Activated CD4-positive, alpha-beta T cell treated with anti-CD3 and anti-CD28 coated beads for 36 hours (primary cell): ENCODE measurements at regions of chr10 and their contacts with region 1.

Region 1: DNA sequence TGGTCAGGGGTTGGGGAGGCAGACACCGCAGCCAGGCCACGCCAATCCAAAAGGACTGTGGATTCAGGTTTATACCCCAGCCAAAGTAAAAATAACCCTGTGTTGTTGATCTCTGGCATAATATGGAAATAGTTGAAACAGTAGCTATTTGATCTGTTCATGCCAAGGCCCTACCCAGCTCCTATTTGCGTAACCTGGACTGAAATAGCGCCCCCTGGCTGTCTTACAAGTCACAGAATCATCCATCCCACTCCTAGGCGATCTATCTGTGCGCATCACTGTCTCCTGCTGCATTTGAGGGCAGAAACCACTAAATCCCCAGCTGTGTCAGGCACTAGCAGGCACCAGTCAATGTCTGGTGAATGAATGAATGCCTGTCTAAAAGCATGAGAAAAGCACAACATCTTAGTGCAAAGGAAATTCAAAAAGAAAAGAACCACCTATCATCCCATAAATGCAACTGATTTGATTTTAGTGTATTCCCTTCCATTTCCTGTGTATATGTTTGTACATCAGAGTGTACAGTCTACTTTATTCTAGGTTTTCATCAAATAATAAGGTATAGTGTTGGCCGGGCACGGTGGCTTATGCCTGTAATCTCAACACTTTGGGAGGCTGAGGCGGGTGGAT is 160.0 kb downstream of the SLIT1 start:
- DNase-seq: peak; percentile 81
- ATAC-seq: peak; percentile 89
- H3K4me3 Mint-ChIP-seq: no peak overlapping the region
- H3K27ac Mint-ChIP-seq: no peak overlapping the region
- H3K4me1 Mint-ChIP-seq: no peaks in the 10 kb centered on the region
- H3K27me3 Mint-ChIP-seq: no peaks in the 10 kb centered on the region

Region 2: DNA sequence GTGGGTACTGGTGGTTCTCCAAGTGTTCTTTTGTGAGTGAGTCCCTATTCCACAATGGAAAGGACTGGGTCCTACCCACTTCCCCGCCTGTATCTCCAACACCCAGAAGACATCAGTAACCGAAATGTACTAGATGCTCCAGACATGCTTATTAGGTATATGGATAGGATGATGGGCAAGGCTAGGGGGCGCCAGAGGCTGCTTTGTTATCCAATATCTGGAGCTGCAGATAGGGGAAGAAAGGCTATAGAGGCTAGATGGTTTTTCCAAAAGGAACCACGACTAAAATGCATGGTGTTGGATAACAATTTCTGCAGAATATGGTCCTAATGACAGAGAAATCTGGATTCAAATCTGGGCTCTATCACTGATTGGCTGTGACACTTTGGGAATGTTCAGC is 382.8 kb before region 1 on chr10:
- CTCF ChIA-PET with region 1: interaction called, 13 read pairs
- POLR2A ChIA-PET with region 1: no interaction called
- intact Hi-C with region 1: loop called in 1 of 2 experiments (anchors 1 kb)
- DNase-seq: peak; percentile 88
- ATAC-seq: peak; percentile 80
- H3K4me3 Mint-ChIP-seq: no peak overlapping the region
- H3K27ac Mint-ChIP-seq: no peak overlapping the region
- H3K4me1 Mint-ChIP-seq: peaks cover 22% of the 10 kb centered on the region
- H3K27me3 Mint-ChIP-seq: no peaks in the 10 kb centered on the region

Region 3: DNA sequence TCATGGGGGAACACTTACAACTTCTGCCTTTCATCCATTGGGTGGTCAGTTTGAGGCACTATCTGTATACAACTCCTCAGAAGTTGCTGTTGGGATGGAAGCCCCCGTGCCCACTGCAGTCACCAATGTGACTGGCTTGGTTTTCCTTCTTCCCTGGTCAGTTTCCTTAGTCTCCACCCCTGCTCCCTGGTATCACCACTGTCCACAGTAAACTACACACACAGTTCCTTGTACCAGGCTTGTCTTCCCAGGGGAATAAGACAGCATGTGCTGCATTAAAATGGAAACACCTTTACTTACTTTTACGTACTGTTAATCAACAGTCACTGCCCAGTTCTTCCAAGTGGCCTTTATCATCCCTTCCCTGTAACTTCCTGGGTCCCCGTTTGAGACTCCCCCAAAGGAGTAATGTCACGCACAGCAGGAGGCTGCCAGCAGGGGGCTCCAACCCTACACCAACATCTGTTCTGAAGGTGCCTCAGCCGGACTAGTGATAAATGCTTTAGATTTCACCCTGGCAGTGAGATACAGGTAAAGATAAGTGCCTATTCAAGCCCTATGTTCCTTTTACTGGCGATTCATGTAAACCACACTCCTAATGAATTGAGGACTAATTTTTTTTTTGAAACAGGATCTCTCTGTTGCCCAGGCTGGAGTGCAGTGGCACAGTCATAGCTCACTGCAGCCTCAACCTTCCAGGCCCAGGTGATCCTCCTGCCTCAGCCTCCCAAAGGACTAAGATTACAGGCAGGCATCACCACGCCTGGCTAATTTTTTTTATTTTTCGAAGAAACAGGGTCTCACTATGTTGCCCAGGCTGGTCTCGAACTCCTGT is 260.1 kb before region 1 on chr10:
- CTCF ChIA-PET with region 1: interaction called, 8 read pairs
- POLR2A ChIA-PET with region 1: no interaction called
- intact Hi-C with region 1: loop called in 1 of 2 experiments (anchors 1 kb)
- DNase-seq: peak; percentile 88
- ATAC-seq: peak; percentile 96
- H3K4me3 Mint-ChIP-seq: no peak overlapping the region
- H3K27ac Mint-ChIP-seq: no peak overlapping the region
- H3K4me1 Mint-ChIP-seq: no peaks in the 10 kb centered on the region
- H3K27me3 Mint-ChIP-seq: no peaks in the 10 kb centered on the region

Region 4: GRCh38 chr10:96910488-96911395 is 115.0 kb before region 1 on chr10:
- CTCF ChIA-PET with region 1: interaction called, 46 read pairs
- POLR2A ChIA-PET with region 1: no interaction called
- intact Hi-C with region 1: loop called (anchors 1 to 2 kb)
- DNase-seq: no peak
- ATAC-seq: no peak
- H3K4me3 Mint-ChIP-seq: no peak overlapping the region
- H3K27ac Mint-ChIP-seq: no peak overlapping the region
- H3K4me1 Mint-ChIP-seq: peaks cover 27% of the 10 kb centered on the region
- H3K27me3 Mint-ChIP-seq: no peaks in the 10 kb centered on the region

Region 5: GRCh38 chr10:97010695-97011206 is 15.0 kb before region 1 on chr10:
- CTCF ChIA-PET with region 1: interaction called, 25 read pairs
- POLR2A ChIA-PET with region 1: no interaction called
- intact Hi-C with region 1: no loop called
- DNase-seq: no peak
- ATAC-seq: no peak
- H3K4me3 Mint-ChIP-seq: no peak overlapping the region
- H3K27ac Mint-ChIP-seq: no peak overlapping the region
- H3K4me1 Mint-ChIP-seq: no peaks in the 10 kb centered on the region
- H3K27me3 Mint-ChIP-seq: peaks cover 2% of the 10 kb centered on the region

Region 6: DNA sequence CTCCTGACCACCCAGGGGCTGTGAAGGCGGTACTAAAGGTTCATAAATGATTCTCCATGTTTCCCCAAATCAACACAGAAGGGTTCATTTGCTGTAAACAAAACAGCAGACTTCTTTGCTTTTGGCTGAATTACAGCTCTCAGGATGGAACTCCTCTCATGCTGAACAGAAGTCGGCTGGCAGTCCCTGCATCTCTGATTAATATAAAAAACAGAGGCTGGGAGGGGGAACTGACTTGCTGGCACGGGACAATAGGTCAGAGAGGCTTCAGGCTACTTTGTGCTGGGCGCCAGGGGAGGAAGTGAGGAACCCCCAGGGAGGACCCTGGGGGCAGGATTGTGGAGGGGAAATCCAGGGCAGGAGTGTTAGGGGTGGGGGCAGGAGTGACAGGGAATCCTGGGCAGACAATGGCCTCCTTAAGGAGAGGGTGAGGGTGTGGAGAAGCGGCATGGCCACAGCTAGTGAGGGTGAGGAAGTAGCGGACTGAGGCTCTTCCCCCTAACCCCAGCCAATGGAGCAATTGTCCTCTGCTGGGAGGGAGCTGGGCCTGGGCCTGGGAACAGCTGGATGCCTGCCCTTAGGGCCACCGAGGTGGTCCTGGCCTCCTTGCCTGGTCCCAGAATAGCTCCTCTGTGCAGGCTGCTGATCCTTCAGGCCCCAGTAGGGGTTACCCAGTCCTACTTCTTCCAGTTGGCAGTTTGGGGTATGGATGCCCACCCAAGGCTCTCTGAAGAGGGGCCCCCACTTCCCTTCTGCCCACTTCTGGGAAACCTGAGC is 755.3 kb after region 1 on chr10:
- CTCF ChIA-PET with region 1: no interaction called
- POLR2A ChIA-PET with region 1: no interaction called
- intact Hi-C with region 1: no loop called
- DNase-seq: no peak
- ATAC-seq: no peak
- H3K4me3 Mint-ChIP-seq: no peak overlapping the region
- H3K27ac Mint-ChIP-seq: no peak overlapping the region
- H3K4me1 Mint-ChIP-seq: peaks cover 22% of the 10 kb centered on the region
- H3K27me3 Mint-ChIP-seq: no peaks in the 10 kb centered on the region